ENCODE measurements at regions of chr13 and their contacts with region 1.

Region 1: DNA sequence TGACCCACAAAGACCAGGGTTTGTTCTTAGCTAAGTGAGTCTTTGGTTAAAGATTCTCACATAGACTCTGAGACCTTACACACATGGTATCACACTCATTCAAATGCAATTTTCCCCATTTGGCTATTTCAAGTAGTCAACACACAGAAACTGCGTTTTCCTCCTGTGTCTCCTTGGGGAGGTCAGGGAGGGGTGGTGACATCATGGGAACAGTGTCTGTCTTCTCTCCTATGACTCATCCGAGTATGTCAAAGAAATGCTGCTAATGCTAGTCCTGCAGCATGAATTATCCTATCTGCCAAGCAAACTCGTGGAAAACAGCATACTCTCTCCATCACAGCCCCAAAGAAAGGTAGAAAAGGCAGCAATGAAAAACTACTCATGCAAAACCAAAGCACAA is 100.2 kb downstream of the ENOX1 start:
- DNase-seq: peak in 4 of 5 donors; percentile 72 to 77 (median 76)
- ATAC-seq: peak; percentile 74 to 90 (median 82)
- H3K4me3 ChIP-seq: no peak overlapping the region
- H3K27ac ChIP-seq: peak overlapping the region in 11 of 12 donors; percentile 24 to 80 (median 54)
- H3K4me1 ChIP-seq: peaks cover 0 to 48% (median 22%) of the 10 kb centered on the region in 12 donors
- H3K27me3 ChIP-seq: no peaks in the 10 kb centered on the region
- CTCF ChIP-seq: no peak
- POLR2A ChIP-seq: no peak

Region 2: GRCh38 chr13:43767341-43767931 is 80.9 kb after region 1 on chr13:
- intact Hi-C with region 1: loop called in 3 of 10 experiments (anchors 5 kb)
- DNase-seq: peak; percentile 38 to 79 (median 58)
- ATAC-seq: peak; percentile 85 to 92 (median 88)
- H3K4me3 ChIP-seq: peak overlapping the region in 1 of 12 donors; percentile 0
- H3K27ac ChIP-seq: peak overlapping the region; percentile 45 to 85 (median 70)
- H3K4me1 ChIP-seq: peaks cover 0 to 34% (median 15%) of the 10 kb centered on the region in 12 donors
- H3K27me3 ChIP-seq: peaks cover 0 to 3% (median 0%) of the 10 kb centered on the region in 9 donors
- CTCF ChIP-seq: no peak
- POLR2A ChIP-seq: no peak